ENCODE measurements at regions of chr4 and their contacts with region 1.

Region 1: DNA sequence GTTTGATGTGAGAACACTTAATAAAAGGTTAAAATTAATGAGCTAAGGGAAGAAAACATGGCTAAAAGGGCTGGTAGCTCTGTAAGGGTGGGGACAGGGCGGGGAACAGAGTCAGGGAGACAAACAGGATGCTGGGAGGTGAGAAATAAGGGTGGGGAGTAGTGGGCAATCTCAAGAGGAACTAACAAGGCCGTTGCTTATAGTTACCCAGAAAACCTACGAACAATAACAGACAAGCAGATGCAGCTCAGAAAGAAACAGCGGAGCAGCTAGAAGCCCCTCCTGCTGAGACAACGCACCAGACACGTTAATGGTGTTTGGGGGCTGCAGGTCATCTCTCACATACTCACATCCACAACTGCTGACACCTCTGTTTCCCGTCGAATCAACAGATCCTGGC is 9.7 kb upstream of the KLF3 start:
- DNase-seq: peak; percentile 30 to 90 (median 72)
- ATAC-seq: peak; percentile 72 to 76
- H3K4me3 Mint-ChIP-seq: peak overlapping the region; percentile 63 to 92 (median 85)
- H3K27ac Mint-ChIP-seq: peak overlapping the region; percentile 91 to 100 (median 100)
- H3K4me1 Mint-ChIP-seq: peaks cover 31 to 62% (median 58%) of the 10 kb centered on the region in 4 donors
- H3K27me3 Mint-ChIP-seq: no peaks in the 10 kb centered on the region

Region 2: GRCh38 chr4:38319456-38320342 is 334.6 kb before region 1 on chr4:
- POLR2A ChIA-PET with region 1: interaction called, 24 read pairs
- DNase-seq: peak; percentile 72 to 95 (median 86)
- ATAC-seq: peak; percentile 69 to 76
- H3K4me3 Mint-ChIP-seq: peak overlapping the region; percentile 72 to 92 (median 86)
- H3K27ac Mint-ChIP-seq: peak overlapping the region; percentile 82 to 98 (median 94)
- H3K4me1 Mint-ChIP-seq: peaks cover 29 to 67% (median 54%) of the 10 kb centered on the region in 4 donors
- H3K27me3 Mint-ChIP-seq: no peaks in the 10 kb centered on the region

Region 3: DNA sequence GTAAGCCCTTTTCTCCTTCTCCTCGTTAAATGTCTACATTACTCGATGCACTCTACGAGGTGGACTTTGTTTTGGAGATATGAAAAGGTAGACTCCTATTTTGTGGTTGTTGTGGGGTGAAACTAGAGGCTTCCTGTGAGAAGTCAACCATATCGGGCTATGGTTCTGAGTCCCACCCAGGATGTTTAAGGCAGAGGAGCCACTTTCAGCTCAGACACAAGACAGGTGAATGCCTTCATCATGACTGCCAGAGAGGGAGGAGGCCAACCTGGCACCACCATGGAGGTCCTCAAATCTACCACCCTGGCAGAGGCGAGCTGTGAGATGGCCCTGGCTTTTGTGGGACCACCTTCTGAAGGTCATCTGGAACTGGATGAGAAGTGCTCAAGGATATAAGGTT is 144.7 kb before region 1 on chr4:
- POLR2A ChIA-PET with region 1: interaction called, 27 read pairs
- DNase-seq: peak in 9 of 10 donors; percentile 23 to 84 (median 61)
- ATAC-seq: peak; percentile 93 to 94
- H3K4me3 Mint-ChIP-seq: peak overlapping the region; percentile 74 to 94 (median 84)
- H3K27ac Mint-ChIP-seq: peak overlapping the region; percentile 83 to 96 (median 93)
- H3K4me1 Mint-ChIP-seq: peaks cover 63 to 94% (median 83%) of the 10 kb centered on the region in 4 donors
- H3K27me3 Mint-ChIP-seq: no peaks in the 10 kb centered on the region

Region 4: GRCh38 chr4:38529189-38530115 is 124.8 kb before region 1 on chr4:
- POLR2A ChIA-PET with region 1: interaction called, 10 read pairs
- DNase-seq: peak in 7 of 10 donors; percentile 21 to 65 (median 48)
- ATAC-seq: peak; percentile 91 to 93
- H3K4me3 Mint-ChIP-seq: peak overlapping the region in 9 of 10 donors; percentile 30 to 81 (median 61)
- H3K27ac Mint-ChIP-seq: peak overlapping the region; percentile 79 to 94 (median 88)
- H3K4me1 Mint-ChIP-seq: peaks cover 14 to 37% (median 22%) of the 10 kb centered on the region in 4 donors
- H3K27me3 Mint-ChIP-seq: no peaks in the 10 kb centered on the region

Region 5: DNA sequence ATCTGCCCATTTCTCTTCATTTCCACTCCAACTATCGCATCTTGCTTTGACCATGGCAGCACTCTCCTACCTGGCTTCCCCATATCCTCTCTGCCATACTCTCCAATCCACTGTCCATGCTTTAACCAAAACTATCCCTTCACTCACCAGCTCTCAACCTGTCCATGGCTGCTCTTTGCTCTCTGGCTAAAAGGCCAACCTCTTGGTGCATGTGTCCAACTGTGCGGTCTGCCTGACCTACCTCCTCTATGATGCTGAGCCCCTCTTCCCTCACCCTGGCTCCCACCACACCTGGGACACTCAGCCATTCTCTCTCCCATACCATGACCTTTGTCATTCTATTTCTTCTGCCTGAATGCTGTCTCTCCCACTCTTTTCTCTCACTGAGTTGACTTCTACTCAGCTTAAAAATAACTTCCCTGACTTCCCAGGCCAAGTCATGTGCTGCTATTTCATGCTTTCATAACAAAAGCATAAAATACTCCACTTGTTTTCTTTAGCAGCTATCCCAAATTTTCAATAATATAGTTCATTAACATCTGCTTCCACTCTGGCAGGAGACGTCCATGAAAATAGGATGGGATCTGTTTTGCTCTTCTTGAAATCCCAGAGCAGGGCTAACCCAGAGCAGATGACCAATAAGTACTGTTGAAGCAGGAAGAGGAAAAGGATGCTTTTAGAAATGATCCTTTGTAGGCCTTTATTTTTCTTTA is 20.1 kb before region 1 on chr4:
- POLR2A ChIA-PET with region 1: interaction called, 14 read pairs
- DNase-seq: no peak
- ATAC-seq: no peak
- H3K4me3 Mint-ChIP-seq: no peak overlapping the region
- H3K27ac Mint-ChIP-seq: peak overlapping the region in 3 of 10 donors; percentile 1 to 35 (median 6)
- H3K4me1 Mint-ChIP-seq: peaks cover 0 to 10% (median 6%) of the 10 kb centered on the region in 4 donors
- H3K27me3 Mint-ChIP-seq: no peaks in the 10 kb centered on the region

Region 6: DNA sequence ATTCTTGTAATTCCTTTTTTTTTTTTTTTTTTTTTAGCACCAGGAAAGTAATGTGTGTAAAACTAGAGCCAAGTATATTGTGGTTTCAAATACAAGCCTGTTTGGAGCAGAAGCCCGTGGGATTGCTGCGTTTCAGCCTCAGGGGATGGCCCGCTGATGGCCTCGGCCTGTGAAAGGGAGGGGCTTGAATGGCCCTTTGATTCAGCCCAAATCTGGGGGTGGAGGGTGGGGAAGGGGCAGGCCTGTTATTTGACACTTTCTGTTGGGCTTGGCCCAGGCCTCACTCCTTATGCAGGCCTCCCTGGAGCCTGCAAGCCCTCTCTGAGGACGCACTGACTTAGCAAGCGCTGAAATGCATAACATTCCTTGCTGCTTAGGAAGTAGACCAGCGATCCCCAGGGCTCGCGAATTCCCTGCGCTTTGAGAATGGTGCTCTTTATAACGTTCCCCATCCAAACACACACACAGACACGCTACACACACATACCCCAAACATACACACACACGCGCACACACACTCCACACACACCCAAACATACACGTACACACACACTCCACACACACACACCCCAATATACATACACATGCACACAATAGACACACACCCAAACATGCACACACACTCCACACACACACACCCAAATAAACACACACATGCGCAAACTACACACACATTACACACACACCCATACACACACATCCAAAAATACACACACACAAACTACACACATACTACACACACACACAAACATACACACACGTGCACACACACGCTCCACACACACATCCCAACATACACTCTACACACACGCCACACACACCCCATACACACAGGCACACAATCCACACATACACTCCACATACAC is 98.9 kb after region 1 on chr4:
- POLR2A ChIA-PET with region 1: no interaction called
- DNase-seq: no peak
- ATAC-seq: no peak
- H3K4me3 Mint-ChIP-seq: no peak overlapping the region
- H3K27ac Mint-ChIP-seq: no peak overlapping the region
- H3K4me1 Mint-ChIP-seq: peaks cover 0 to 2% (median 0%) of the 10 kb centered on the region in 4 donors
- H3K27me3 Mint-ChIP-seq: no peaks in the 10 kb centered on the region